GM10248 (cell line): ENCODE measurements at regions of chr2 and their contacts with region 1.

Region 1: GRCh38 chr2:18378020-18378653 is 182.3 kb downstream of the RDH14 start:
- DNase-seq: peak; percentile 39
- CTCF ChIP-seq: peak; percentile 78

Region 2: GRCh38 chr2:17804358-17804757 is 573.8 kb before region 1 on chr2:
- CTCF ChIA-PET with region 1: no interaction called
- POLR2A ChIA-PET with region 1: no interaction called
- DNase-seq: peak; percentile 44
- CTCF ChIP-seq: no peak

Region 3: DNA sequence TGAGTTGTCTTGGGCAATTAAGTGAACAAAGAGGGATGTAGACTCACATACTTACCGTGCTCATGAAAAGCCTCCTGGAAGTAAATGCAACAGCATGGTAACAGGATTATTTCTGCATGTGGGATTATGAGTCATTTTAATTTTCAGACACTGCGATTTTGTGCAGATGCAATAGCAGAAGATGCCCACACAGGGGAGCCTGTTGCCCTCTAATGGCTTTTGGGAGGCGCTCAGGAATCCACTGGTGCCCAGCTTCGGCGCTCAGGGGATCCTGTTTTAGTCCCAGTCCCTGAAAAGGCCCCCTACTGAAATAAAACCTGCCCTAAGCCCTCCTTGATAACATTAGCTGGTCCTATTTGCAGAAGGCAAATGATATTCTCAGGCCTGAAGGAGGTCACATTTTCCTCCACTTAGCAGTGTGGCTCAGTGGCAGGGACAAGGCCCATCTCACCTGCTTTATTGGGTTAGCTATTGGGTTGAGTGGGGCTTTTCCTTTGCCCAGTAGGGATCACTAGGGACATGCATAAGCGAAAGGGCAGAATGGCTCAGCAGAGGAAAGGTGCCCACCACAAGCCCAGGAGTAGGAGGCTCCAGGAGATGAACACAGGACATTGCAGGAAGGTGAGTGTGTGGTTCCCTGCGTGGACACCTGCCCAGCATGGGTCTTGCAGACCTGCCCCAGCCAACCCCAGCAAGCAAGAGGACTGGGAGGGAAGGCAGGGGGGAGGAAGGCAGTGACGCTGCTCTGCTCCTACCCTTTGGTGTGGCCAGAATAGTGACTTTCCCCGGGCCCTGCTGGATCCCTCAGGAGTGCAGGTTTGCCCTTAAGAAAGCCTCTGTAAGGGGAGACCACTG is 526.2 kb before region 1 on chr2:
- CTCF ChIA-PET with region 1: interaction called, 20 read pairs
- POLR2A ChIA-PET with region 1: no interaction called
- DNase-seq: peak; percentile 74
- CTCF ChIP-seq: peak; percentile 87

Region 4: GRCh38 chr2:18117592-18117991 is 260.5 kb before region 1 on chr2:
- CTCF ChIA-PET with region 1: no interaction called
- POLR2A ChIA-PET with region 1: no interaction called
- DNase-seq: peak; percentile 25
- CTCF ChIP-seq: no peak